Body of pancreas (tissue), 4 donors: ENCODE measurements at regions of chr6 and their contacts with region 1.

Region 1: DNA sequence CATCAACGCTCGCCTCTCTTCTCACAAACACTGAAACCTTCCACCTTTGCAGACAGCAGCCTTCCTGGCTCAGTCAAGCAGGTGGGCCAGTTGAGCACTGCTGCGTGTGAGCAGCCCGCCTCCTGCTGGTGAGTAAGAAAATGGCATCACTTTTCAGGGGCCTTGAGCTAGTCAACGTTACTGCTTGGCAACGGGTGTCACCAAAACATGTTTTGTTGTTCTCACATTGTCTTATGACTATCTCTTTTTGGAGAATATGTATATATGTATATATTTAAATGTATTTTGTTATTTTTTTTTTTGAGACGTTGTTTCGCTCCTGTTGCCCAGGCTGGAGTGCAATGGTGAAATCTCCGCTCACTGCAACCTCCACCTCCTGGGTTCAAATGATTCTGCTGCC is 97.0 kb upstream of the AGPAT4 start:
- DNase-seq: peak; percentile 70 to 76 (median 73)
- ATAC-seq: peak; percentile 78
- H3K4me3 ChIP-seq: no peak overlapping the region
- H3K27ac ChIP-seq: no peak overlapping the region
- H3K4me1 ChIP-seq: no peaks in the 10 kb centered on the region
- H3K27me3 ChIP-seq: no peaks in the 10 kb centered on the region
- CTCF ChIP-seq: peak; percentile 80 to 89 (median 83)
- POLR2A ChIP-seq: no peak

Region 2: DNA sequence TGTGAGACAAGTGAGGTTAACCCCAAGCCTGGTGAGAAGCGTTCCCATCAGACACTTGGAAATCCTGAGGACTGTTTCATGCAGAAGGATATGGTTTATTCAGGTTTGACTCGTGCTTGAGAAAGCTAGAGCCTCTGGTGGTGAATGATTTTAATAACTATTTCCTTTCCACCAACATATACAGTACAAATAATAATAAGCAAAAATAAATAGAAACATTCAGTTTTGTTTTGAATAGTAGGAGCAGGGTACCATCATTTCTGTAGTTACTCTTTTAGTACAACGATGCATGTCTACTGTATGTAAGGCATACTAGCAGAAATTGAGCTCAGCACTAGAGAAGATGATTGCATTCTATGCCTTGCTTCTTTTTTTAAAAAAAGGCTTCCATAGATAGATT is 635.4 kb before region 1 on chr6:
- intact Hi-C with region 1: loop called (anchors 5 kb)
- DNase-seq: no peak
- ATAC-seq: no peak
- H3K4me3 ChIP-seq: no peak overlapping the region
- H3K27ac ChIP-seq: no peak overlapping the region
- H3K4me1 ChIP-seq: no peaks in the 10 kb centered on the region
- H3K27me3 ChIP-seq: no peaks in the 10 kb centered on the region
- CTCF ChIP-seq: no peak
- POLR2A ChIP-seq: no peak

Region 3: GRCh38 chr6:160926868-160927291 is 444.0 kb before region 1 on chr6:
- intact Hi-C with region 1: loop called (anchors 5 kb)
- DNase-seq: no peak
- ATAC-seq: no peak
- H3K4me3 ChIP-seq: no peak overlapping the region
- H3K27ac ChIP-seq: no peak overlapping the region
- H3K4me1 ChIP-seq: peaks cover 14% of the 10 kb centered on the region
- H3K27me3 ChIP-seq: no peaks in the 10 kb centered on the region
- CTCF ChIP-seq: no peak
- POLR2A ChIP-seq: no peak

Region 4: DNA sequence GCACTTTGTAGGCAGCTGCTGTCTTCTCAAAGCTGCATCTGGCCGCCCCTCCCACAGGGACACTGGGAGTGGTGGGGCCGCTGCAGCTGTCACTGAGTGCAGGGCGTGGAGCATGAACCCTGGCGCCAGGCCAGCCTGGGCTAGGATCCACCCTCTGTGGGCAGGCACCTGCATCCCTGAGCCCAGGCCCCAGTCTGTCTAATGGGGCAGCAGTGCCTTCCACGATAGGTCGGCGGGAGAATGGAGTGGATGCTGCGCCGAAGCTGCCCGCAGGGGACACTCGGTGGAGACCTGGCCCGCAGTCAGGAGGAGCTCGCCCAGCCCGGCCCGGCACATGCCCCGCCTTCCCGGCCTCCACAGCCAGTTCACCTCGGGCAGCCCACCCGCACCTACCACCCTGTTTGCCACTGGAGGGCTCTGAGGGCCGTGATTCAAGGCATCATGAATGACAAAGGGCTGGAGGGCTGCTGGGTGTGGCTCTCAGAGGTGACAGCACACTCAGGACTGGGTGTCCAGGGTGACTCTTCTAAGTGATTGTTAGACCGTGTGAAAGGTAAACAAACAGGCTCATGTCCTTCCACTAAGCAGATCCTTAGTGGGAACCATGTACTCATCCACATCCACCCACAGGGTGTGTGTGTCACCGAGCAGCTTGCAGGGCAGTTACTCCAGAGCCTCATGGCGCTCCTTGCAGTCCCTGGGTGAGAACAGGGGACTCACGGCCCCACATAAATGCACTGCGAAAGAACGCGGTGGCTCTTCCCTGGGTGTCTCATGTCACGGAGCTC is 230.9 kb before region 1 on chr6:
- intact Hi-C with region 1: loop called (anchors 10 kb)
- DNase-seq: peak in 2 of 4 donors; percentile 48 to 76
- ATAC-seq: no peak
- H3K4me3 ChIP-seq: no peak overlapping the region
- H3K27ac ChIP-seq: no peak overlapping the region
- H3K4me1 ChIP-seq: no peaks in the 10 kb centered on the region
- H3K27me3 ChIP-seq: no peaks in the 10 kb centered on the region
- CTCF ChIP-seq: peak in 1 of 7 experiments; percentile 56
- POLR2A ChIP-seq: no peak